A673 (cell line): ENCODE measurements at regions of chr1 and their contacts with region 1.

Region 1: GRCh38 chr1:26328597-26328996 is 10.8 kb downstream of the CD52 start:
- DNase-seq: no peak
- H3K4me3 ChIP-seq: no peak overlapping the region
- H3K27ac ChIP-seq: no peak overlapping the region
- H3K4me1 ChIP-seq: no peaks in the 10 kb centered on the region
- H3K27me3 ChIP-seq: no peaks in the 10 kb centered on the region
- CTCF ChIP-seq: no peak

Region 2: DNA sequence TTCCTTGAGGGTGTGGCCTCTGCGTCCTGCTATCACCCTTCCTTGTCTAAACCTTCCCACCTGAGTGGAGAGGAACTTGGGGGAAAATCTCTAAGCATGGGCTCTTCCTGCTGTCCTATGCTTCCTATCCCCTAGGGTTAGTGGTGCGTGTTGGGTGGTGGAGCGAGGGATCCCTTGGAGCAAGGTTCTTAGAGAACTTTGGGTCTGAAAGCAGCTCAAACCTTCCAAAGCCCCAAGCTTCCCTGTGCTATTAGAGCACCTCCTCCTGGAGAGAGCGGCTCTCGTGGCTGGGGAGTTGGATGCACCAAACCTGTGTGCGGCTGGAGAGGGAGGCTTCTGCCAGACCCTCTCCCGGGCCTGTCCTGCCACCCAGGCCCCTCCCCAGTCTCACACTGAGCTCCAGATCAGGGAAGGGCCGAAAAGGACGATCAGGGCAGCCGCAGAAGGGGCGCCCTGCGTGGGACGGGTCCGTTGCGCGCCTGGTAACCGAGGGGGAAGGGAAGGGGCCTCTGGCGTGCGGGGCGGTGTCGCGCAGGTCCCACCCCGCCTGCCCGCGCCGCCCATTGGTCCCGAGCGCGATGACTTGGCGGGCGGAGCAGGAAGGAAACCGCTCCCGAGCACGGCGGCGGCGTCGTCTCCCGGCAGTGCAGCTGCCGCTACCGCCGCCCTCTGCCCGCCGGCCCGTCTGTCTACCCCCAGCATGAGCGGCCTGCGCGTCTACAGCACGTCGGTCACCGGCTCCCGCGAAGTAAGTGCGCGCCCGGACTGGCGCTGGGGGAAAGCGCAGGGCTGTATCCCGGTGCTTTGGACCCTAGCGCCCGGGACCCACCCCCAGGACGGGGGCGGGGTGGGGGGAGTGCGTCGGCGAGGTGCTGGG is 48.9 kb before region 1 on chr1 and contains the start of gene SH3BGRL3:
- CTCF ChIA-PET with region 1: no interaction called
- POLR2A ChIA-PET with region 1: no interaction called
- intact Hi-C with region 1: no loop called
- DNase-seq: peak; percentile 90
- H3K4me3 ChIP-seq: peak within 1 kb of the TSS; percentile 72
- H3K27ac ChIP-seq: peak within 1 kb of the TSS; percentile 71
- H3K4me1 ChIP-seq: peaks cover 57% of the 10 kb centered on the region
- H3K27me3 ChIP-seq: no peaks in the 10 kb centered on the region
- CTCF ChIP-seq: peak; percentile 77
- total RNA-seq, gene SH3BGRL3: 133 and 138 TPM in 2 replicates

Region 3: GRCh38 chr1:26345718-26346549 is 17.3 kb after region 1 on chr1:
- CTCF ChIA-PET with region 1: no interaction called
- POLR2A ChIA-PET with region 1: interaction called, 12 read pairs
- intact Hi-C with region 1: no loop called
- DNase-seq: no peak
- H3K4me3 ChIP-seq: no peak overlapping the region
- H3K27ac ChIP-seq: no peak overlapping the region
- H3K4me1 ChIP-seq: no peaks in the 10 kb centered on the region
- H3K27me3 ChIP-seq: no peaks in the 10 kb centered on the region
- CTCF ChIP-seq: no peak